ENCODE measurements at regions of chr1 and their contacts with region 1.

Region 1: GRCh38 chr1:37514350-37515184 is at the start of gene MEAF6:
- DNase-seq: peak; percentile 98
- H3K4me3 ChIP-seq: peak within 1 kb of the TSS; percentile 83 to 96
- H3K27ac ChIP-seq: peak within 1 kb of the TSS; percentile 94 to 97
- H3K4me1 ChIP-seq: peaks cover 0 to 15% of the 10 kb centered on the region in 2 experiments; a peak in 1 of 4 replicates
- H3K27me3 ChIP-seq: no peaks in the 10 kb centered on the region
- CTCF ChIP-seq: peak; percentile 70
- EP300 ChIP-seq: no peak
- RAD21 ChIP-seq: no peak
- polyA plus RNA-seq, gene MEAF6: 47.2 and 60.5 TPM in 2 replicates

Region 2: DNA sequence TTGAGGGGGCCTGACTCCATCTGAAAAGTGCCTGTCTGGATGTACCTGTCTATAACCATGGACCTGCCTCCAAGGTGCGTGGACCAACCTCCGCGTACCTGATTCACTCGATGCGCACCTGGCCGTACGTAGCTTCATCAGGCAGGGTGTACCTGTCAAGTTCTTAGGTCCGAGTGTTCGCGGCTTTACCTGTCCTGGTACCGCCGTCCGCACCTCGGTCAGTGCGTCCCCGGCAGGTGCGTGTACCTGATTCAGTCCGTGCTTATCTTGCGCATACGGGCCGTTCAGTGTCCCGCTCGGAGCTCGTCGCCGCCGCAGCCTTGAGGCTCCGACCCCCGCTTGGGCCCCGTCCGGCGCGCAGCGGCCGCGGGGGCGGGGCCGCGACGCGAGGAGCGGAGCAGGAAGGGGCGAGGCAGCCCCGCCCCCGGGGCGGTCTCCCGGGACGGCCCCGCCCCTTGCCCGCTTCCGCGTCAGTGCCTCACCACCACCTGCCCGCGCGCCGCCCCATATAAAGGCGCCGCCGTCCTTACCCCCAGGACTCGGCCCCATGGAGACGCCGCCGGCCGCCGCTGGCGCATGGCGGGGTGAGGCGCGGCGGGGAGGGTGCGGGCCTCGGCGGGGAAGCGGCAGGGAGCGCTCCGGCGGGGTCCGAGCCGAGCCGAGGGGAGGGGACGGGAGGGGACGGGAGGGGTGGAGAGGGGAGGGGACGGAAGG is 40.4 kb before region 1 on chr1 and contains the start of gene ZC3H12A:
- CTCF ChIA-PET with region 1: interaction called, 13 read pairs
- POLR2A ChIA-PET with region 1: interaction called, 4 read pairs
- DNase-seq: peak; percentile 98
- H3K4me3 ChIP-seq: peak within 1 kb of the TSS; percentile 82 to 94
- H3K27ac ChIP-seq: peak within 1 kb of the TSS; percentile 60 to 96
- H3K4me1 ChIP-seq: peaks cover 66% of the 10 kb centered on the region in 2 experiments
- H3K27me3 ChIP-seq: no peaks in the 10 kb centered on the region
- CTCF ChIP-seq: no peak
- EP300 ChIP-seq: no peak
- RAD21 ChIP-seq: no peak
- polyA plus RNA-seq, gene ZC3H12A: 7.4 and 8.9 TPM in 2 replicates

Region 3: DNA sequence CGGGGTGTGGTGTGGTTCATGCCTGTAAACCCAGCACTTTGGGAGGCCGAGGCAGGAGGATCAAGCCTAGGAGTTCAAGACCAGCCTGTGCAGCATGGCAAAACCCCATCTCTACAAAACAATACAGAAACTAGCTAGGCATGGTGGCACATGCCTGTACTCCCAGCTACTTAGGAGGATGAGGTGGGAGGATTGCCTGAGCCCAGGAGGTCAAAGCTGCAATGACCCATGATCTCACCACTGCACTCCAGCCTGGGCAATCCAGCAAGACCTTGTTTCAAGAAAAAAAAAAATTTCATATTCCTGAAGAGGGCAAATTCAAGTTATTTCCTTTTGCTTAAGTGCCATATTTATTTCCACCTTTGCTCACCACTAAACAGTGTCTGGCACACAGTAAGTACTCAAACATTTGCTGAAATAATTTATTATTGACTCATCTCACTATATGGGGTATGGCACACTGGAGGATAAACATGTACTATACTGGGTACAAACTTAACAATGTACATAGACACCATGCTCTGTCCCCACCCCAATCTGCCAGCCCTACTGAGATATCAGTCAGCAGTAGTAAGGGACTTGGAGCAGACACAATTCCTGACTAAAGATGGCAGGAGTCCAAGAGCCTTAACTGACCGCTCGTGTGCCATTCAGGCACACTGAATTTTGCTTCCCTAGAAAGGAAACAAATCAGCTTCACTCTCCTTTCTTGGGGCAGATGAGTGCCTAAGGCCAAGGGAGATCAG is 15.5 kb before region 1 on chr1:
- CTCF ChIA-PET with region 1: interaction called, 38 read pairs
- POLR2A ChIA-PET with region 1: interaction called, 5 read pairs
- DNase-seq: peak; percentile 53
- H3K4me3 ChIP-seq: no peak overlapping the region
- H3K27ac ChIP-seq: peak overlapping the region; percentile 56 to 70
- H3K4me1 ChIP-seq: peaks cover 9 to 19% of the 10 kb centered on the region in 2 experiments
- H3K27me3 ChIP-seq: no peaks in the 10 kb centered on the region
- CTCF ChIP-seq: no peak
- EP300 ChIP-seq: no peak
- RAD21 ChIP-seq: no peak

Region 4: GRCh38 chr1:37549341-37549740 is 34.8 kb after region 1 on chr1:
- CTCF ChIA-PET with region 1: interaction called, 10 read pairs
- POLR2A ChIA-PET with region 1: no interaction called
- DNase-seq: no peak
- H3K4me3 ChIP-seq: no peak overlapping the region
- H3K27ac ChIP-seq: peak overlapping the region in 1 of 2 experiments; percentile 44; a peak in 1 of 4 replicates
- H3K4me1 ChIP-seq: peaks cover 10 to 11% of the 10 kb centered on the region in 2 experiments; a peak in 2 of 4 replicates
- H3K27me3 ChIP-seq: no peaks in the 10 kb centered on the region
- CTCF ChIP-seq: no peak
- EP300 ChIP-seq: no peak
- RAD21 ChIP-seq: no peak

Region 5: DNA sequence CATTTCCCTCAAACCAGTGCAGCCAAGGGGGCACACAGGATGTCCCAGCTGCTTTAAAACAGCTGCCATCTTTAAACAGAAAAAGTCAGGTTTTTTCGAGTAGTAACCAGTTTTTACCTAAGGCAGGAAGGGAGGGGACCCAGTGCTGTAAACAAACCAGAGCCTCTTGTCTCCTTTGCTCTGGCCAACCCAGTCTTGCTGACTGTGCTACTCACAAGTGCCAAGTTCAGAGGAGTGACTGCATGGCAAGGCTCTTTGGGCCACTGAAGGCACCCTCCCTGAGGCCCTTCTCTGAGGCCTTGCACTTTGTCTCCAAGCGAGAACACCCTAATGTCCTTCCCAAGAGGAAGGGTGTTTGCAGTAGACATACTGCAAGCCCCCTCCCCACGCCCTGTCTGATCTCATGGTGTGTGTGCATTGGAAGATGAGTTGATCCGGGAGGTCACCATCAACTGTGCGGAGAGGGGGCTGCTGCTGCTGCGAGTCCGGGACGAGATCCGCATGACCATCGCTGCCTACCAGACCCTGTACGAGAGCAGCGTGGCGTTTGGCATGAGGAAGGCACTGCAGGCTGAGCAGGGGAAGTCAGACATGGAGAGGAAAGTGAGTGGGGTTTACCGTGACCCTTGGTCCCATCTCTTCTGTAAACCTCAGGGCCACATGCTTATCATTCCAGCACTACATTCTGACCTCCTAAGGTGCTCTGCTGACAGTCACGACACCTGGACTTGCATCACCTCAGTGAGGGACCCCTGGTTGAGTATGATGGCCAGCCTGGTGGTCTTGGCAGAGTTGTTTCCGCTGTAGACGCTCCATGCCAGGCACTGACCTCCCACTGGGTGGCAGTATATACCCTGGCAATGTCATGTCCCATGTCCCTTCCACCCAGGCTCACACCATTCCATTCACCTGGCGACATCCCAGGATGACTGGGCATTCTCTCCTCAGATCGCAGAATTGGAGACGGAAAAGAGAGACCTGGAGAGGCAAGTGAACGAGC is 46.9 kb after region 1 on chr1:
- CTCF ChIA-PET with region 1: no interaction called
- POLR2A ChIA-PET with region 1: no interaction called
- DNase-seq: peak; percentile 73
- H3K4me3 ChIP-seq: no peak overlapping the region
- H3K27ac ChIP-seq: no peak overlapping the region; a peak in 1 of 4 replicates
- H3K4me1 ChIP-seq: peaks cover 0 to 9% of the 10 kb centered on the region in 2 experiments; a peak in 1 of 4 replicates
- H3K27me3 ChIP-seq: no peaks in the 10 kb centered on the region
- CTCF ChIP-seq: peak; percentile 75
- EP300 ChIP-seq: no peak
- RAD21 ChIP-seq: peak; percentile 69